OCI-LY7 (cell line): ENCODE measurements at regions of chr12 and their contacts with region 1.

Region 1: DNA sequence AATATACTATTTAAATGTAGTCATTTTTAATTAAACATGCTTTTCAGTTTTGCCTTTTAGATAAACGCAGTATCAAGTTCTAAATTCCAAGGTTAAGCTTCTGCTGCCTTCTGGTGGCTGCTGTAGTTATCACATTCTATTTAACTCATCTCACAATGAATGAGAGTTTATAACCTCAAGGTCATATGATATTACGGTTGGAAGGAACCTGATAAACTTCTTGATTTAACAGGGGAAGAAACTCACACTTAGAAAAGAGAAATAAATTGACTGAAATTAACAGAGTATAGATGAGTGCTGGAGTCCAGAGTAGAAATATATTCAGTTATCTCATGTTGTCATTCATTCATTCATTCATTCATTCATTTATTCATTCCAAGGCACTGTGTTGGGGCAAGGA is 31.9 kb downstream of the GUCY2C start:
- DNase-seq: peak; percentile 77
- H3K4me3 ChIP-seq: no peak overlapping the region
- H3K27ac ChIP-seq: no peak overlapping the region
- H3K4me1 ChIP-seq: peaks cover 25% of the 10 kb centered on the region
- CTCF ChIP-seq: peak; percentile 96

Region 2: GRCh38 chr12:14362352-14362751 is 302.2 kb before region 1 on chr12:
- CTCF ChIA-PET with region 1: no interaction called
- POLR2A ChIA-PET with region 1: no interaction called
- intact Hi-C with region 1: no loop called
- DNase-seq: peak; percentile 31
- H3K4me3 ChIP-seq: no peak overlapping the region
- H3K27ac ChIP-seq: peak overlapping the region; percentile 62
- H3K4me1 ChIP-seq: peaks cover 28% of the 10 kb centered on the region
- CTCF ChIP-seq: no peak

Region 3: GRCh38 chr12:14514154-14514842 is 150.2 kb before region 1 on chr12:
- CTCF ChIA-PET with region 1: no interaction called
- POLR2A ChIA-PET with region 1: interaction called, 3 read pairs
- intact Hi-C with region 1: loop called (anchors 2 kb)
- DNase-seq: peak; percentile 80
- H3K4me3 ChIP-seq: no peak overlapping the region
- H3K27ac ChIP-seq: no peak overlapping the region
- H3K4me1 ChIP-seq: peaks cover 6% of the 10 kb centered on the region
- CTCF ChIP-seq: peak; percentile 92

Region 4: DNA sequence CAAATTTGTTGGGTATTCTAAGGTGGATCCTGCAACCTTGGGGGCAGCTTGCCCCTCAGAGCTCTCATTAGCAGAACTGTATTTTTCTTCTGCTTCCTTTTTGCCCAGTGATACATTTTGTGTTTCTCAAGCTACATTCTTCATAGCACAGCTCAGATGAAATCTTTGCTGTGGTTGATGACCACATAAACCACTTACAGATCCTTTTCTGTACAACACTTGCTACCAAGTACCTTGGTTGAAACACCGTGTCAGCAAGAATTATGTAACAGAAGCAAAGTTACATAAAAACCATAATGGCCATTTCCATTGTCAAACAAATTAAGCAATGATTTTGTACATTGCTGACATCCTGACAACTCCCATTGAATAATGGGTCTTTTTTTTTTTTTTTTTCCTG is 87.2 kb before region 1 on chr12:
- CTCF ChIA-PET with region 1: interaction called, 4 read pairs
- POLR2A ChIA-PET with region 1: interaction called, 5 read pairs
- intact Hi-C with region 1: loop called (anchors 1 kb)
- DNase-seq: peak; percentile 79
- H3K4me3 ChIP-seq: peak overlapping the region; percentile 41
- H3K27ac ChIP-seq: peak overlapping the region; percentile 93
- H3K4me1 ChIP-seq: peaks cover 62% of the 10 kb centered on the region
- CTCF ChIP-seq: no peak

Region 5: GRCh38 chr12:14629832-14630710 is 34.4 kb before region 1 on chr12:
- CTCF ChIA-PET with region 1: no interaction called
- POLR2A ChIA-PET with region 1: interaction called, 5 read pairs
- intact Hi-C with region 1: loop called (anchors 1 kb)
- DNase-seq: peak; percentile 82
- H3K4me3 ChIP-seq: no peak overlapping the region
- H3K27ac ChIP-seq: no peak overlapping the region
- H3K4me1 ChIP-seq: peaks cover 28% of the 10 kb centered on the region
- CTCF ChIP-seq: peak; percentile 99